Caco-2 (cell line): ENCODE measurements at regions of chr10 and their contacts with region 1.

Region 1: GRCh38 chr10:71696628-71697326 is 22.8 kb downstream of the C10orf105 start:
- DNase-seq: peak; percentile 77 to 85
- H3K4me3 ChIP-seq: no peak overlapping the region
- H3K4me3 Mint-ChIP-seq: no peak overlapping the region
- H3K27ac Mint-ChIP-seq: no peak overlapping the region
- H3K4me1 ChIP-seq: no peaks in the 10 kb centered on the region
- H3K4me1 Mint-ChIP-seq: no peaks in the 10 kb centered on the region
- H3K27me3 ChIP-seq: no peaks in the 10 kb centered on the region
- H3K27me3 Mint-ChIP-seq: peaks cover 4% of the 10 kb centered on the region
- CTCF ChIP-seq: peak; percentile 97 to 99

Region 2: GRCh38 chr10:71314028-71314693 is 382.6 kb before region 1 on chr10:
- CTCF ChIA-PET with region 1: interaction called, 9 read pairs
- POLR2A ChIA-PET with region 1: no interaction called
- intact Hi-C with region 1: loop called (anchors 1 kb)
- DNase-seq: peak in 1 of 2 experiments; percentile 69
- H3K4me3 ChIP-seq: no peak overlapping the region
- H3K4me3 Mint-ChIP-seq: no peak overlapping the region
- H3K27ac Mint-ChIP-seq: no peak overlapping the region
- H3K4me1 ChIP-seq: 0 out of 2 replicates have a peak, but pooled peaks cover 5% of the 10 kb centered on the region
- H3K4me1 Mint-ChIP-seq: no peaks in the 10 kb centered on the region
- H3K27me3 ChIP-seq: no peaks in the 10 kb centered on the region
- H3K27me3 Mint-ChIP-seq: peaks cover 12% of the 10 kb centered on the region
- CTCF ChIP-seq: peak; percentile 96 to 99

Region 3: GRCh38 chr10:71608819-71609768 is 87.7 kb before region 1 on chr10:
- CTCF ChIA-PET with region 1: no interaction called
- POLR2A ChIA-PET with region 1: no interaction called
- intact Hi-C with region 1: loop called (anchors 5 kb)
- DNase-seq: peak; percentile 83 to 86
- H3K4me3 ChIP-seq: no peak overlapping the region
- H3K4me3 Mint-ChIP-seq: no peak overlapping the region
- H3K27ac Mint-ChIP-seq: no peak overlapping the region
- H3K4me1 ChIP-seq: peaks cover 14% of the 10 kb centered on the region; the same call in 1 of the 2 replicates
- H3K4me1 Mint-ChIP-seq: no peaks in the 10 kb centered on the region
- H3K27me3 ChIP-seq: no peaks in the 10 kb centered on the region
- H3K27me3 Mint-ChIP-seq: no peaks in the 10 kb centered on the region
- CTCF ChIP-seq: peak; percentile 90 to 97

Region 4: GRCh38 chr10:71671994-71672946 is 24.5 kb before region 1 on chr10:
- CTCF ChIA-PET with region 1: interaction called, 10 read pairs
- POLR2A ChIA-PET with region 1: no interaction called
- intact Hi-C with region 1: no loop called
- DNase-seq: no peak
- H3K4me3 ChIP-seq: no peak overlapping the region
- H3K4me3 Mint-ChIP-seq: no peak overlapping the region
- H3K27ac Mint-ChIP-seq: no peak overlapping the region
- H3K4me1 ChIP-seq: no peaks in the 10 kb centered on the region
- H3K4me1 Mint-ChIP-seq: no peaks in the 10 kb centered on the region
- H3K27me3 ChIP-seq: no peaks in the 10 kb centered on the region
- H3K27me3 Mint-ChIP-seq: peaks cover 3% of the 10 kb centered on the region
- CTCF ChIP-seq: no peak

Region 5: DNA sequence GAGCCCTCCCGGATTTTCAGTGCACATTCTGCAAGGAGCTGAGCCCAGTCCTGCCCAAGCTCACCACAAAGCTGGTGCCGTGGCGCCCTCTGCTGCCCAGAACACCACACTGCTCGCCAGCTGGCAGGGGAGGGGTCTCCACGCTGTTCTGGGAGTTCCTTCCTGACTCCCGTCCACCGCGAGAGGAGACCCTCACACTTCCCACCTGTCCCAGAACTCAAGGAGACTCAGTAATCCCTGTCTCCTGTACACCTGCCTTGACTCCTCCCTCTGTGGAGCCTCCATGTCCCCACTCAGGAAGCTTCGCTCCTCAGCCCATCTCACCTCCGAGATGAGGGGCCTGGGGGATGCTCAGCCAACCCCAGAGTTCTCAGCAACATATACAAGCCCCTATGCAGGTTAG is 11.5 kb after region 1 on chr10:
- CTCF ChIA-PET with region 1: interaction called, 56 read pairs
- POLR2A ChIA-PET with region 1: no interaction called
- intact Hi-C with region 1: no loop called
- DNase-seq: peak; percentile 76 to 88
- H3K4me3 ChIP-seq: no peak overlapping the region
- H3K4me3 Mint-ChIP-seq: no peak overlapping the region
- H3K27ac Mint-ChIP-seq: peak overlapping the region; percentile 2
- H3K4me1 ChIP-seq: 0 out of 2 replicates have a peak, but pooled peaks cover under 1% of the 10 kb centered on the region
- H3K4me1 Mint-ChIP-seq: no peaks in the 10 kb centered on the region
- H3K27me3 ChIP-seq: no peaks in the 10 kb centered on the region
- H3K27me3 Mint-ChIP-seq: no peaks in the 10 kb centered on the region
- CTCF ChIP-seq: peak; percentile 97 to 98

Region 6: DNA sequence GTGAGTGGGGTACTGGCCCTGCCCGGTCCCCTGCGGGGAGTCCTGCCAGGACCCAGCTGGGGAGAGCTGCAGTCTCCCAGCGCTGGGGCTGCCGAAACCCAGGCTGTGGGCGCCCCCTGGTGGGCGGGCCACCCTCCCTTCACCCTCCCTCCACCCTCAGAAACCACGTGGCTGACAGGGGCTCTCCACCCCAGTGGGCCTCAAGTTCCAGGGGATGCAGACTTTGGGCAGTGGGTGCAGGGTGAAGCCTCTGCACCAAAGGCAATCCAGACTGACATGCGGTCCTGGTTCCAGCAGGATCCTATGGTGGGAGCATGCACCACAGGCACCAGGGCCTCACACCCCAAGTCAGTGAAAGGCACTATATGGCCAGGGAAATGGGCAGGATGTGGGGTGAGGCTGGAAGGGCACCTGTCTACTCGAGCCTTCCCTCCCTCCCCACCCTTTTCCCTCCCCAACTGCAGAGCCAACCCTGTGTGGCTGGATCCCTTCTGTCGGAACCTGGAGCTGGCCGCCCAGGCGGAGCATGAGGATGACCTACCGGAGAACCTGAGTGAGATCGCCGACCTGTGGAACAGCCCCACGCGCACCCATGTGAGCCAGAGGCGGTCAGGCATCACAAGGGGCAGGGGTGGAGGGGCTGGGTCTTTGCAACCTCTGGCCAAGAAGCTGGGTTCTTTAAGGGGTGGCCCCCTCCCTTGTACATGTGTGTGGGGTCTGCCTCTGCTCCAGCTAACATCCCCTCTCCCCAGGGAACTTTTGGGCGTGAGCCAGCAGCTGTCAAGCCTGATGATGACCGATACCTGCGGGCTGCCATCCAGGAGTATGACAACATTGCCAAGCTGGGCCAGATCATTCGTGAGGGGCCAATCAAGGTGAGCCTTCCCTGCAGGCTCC is 115.5 kb after region 1 on chr10:
- CTCF ChIA-PET with region 1: interaction called, 15 read pairs
- POLR2A ChIA-PET with region 1: no interaction called
- intact Hi-C with region 1: no loop called
- DNase-seq: peak; percentile 74 to 91
- H3K4me3 ChIP-seq: no peak overlapping the region
- H3K4me3 Mint-ChIP-seq: no peak overlapping the region
- H3K27ac Mint-ChIP-seq: no peak overlapping the region
- H3K4me1 ChIP-seq: no peaks in the 10 kb centered on the region
- H3K4me1 Mint-ChIP-seq: peaks cover 7% of the 10 kb centered on the region
- H3K27me3 ChIP-seq: no peaks in the 10 kb centered on the region
- H3K27me3 Mint-ChIP-seq: no peaks in the 10 kb centered on the region
- CTCF ChIP-seq: peak; percentile 98